OCI-LY7 (cell line): ENCODE measurements at regions of chr10 and their contacts with region 1.

Region 1: GRCh38 chr10:31928549-31929260 is at the start of gene ARHGAP12:
- DNase-seq: peak; percentile 85
- H3K4me3 ChIP-seq: peak within 1 kb of the TSS; percentile 84
- H3K27ac ChIP-seq: peak within 1 kb of the TSS; percentile 61
- H3K4me1 ChIP-seq: peaks cover 44% of the 10 kb centered on the region
- CTCF ChIP-seq: no peak
- total RNA-seq, gene ARHGAP12: 11.8 and 15.6 TPM in 2 replicates

Region 2: DNA sequence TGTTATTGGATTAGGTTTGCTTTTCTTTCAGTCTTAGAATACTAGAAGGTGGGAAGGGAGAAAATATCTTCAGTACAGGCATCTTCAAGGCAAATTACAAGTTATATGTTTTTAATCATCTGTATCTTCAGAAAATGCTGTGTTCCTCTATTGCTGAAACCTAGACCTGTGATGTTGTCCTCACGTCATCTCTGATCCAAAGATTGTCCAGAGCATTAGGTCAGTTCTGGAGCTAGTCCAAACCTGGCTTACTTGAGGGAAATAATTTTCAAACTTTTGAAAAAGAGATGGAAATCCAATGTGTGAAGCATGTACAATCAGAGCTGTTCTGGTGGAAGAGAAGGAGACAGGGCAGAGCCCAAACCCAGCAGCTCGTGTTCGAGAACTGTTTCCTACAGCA is 392.4 kb before region 1 on chr10:
- CTCF ChIA-PET with region 1: no interaction called
- POLR2A ChIA-PET with region 1: no interaction called
- intact Hi-C with region 1: no loop called
- DNase-seq: no peak
- H3K4me3 ChIP-seq: no peak overlapping the region
- H3K27ac ChIP-seq: no peak overlapping the region
- H3K4me1 ChIP-seq: no peaks in the 10 kb centered on the region
- CTCF ChIP-seq: no peak

Region 3: DNA sequence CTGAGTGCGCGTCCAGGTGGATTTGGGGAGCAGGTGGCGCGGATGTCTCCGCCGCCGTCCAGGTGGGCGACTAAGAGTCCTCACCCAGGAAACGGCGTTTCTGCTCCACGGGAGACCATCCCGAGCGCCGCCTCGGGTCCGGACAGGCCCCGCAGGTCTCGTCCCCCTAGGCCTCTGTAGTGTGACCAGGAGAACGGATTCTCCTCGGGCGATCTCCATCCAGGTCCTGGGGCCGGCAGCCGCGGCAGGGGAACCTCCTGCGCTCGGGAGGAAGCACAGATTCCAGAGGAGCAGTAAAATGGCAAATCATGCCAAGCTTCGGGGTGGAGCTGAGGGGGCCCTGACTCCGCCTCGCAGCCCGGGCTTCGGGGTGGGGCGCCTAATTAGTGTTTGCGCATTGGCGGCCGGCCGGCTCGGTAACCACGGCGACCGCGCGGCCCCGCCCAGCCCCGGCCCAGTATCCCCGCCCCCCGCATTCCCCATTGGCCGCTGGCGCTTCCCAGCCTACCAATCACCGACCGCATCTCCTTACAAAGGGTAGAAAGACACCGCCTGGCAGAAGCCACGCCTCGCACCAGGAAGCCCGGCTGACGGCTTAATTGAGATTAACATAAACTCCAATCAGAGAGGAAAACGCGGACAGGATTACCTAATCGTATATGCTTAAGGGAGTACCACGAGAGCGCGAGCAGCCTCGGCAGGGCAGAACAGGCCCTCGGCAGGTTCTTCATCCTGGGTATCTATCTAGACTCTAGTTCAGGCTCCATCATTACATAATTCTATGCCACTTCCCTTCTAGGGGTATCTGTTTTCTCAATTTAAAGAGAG is 168.7 kb before region 1 on chr10:
- CTCF ChIA-PET with region 1: no interaction called
- POLR2A ChIA-PET with region 1: no interaction called
- intact Hi-C with region 1: loop called (anchors 5 kb)
- DNase-seq: peak; percentile 98
- H3K4me3 ChIP-seq: peak overlapping the region; percentile 80
- H3K27ac ChIP-seq: peak overlapping the region; percentile 42
- H3K4me1 ChIP-seq: peaks cover 8% of the 10 kb centered on the region
- CTCF ChIP-seq: no peak

Region 4: DNA sequence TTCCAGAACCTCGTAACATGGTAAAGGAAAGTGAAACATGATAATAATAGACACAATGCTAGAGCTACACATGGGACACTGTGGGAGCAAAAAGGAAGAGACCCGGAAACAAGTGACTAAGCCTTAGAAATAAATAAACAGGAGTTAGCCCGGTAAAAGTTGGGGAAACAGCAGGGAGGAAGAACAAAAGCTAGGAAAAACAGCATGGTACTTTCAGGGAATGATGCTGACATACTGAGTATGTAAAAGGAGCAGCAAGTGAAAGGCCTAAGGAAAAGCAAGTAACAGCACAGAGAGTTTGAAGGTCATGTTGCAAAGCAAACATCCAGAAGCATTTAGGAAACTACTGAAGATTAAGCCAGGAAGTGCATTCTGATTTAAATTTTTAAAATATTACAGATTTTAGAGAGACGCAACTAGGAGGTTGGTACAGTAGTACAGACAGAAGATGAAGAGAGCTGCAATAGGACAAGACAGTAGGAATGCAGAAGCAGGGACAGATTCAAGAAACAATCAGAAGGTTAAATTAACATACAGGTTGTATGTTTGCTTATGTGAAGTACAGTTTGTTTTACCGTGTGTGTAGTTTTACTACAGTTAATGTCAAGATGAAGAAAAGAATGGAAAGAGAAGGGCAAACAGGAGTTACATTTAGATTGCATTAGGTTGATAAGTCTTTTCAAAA is 63.7 kb before region 1 on chr10:
- CTCF ChIA-PET with region 1: no interaction called
- POLR2A ChIA-PET with region 1: interaction called, 12 read pairs
- intact Hi-C with region 1: no loop called
- DNase-seq: no peak
- H3K4me3 ChIP-seq: no peak overlapping the region
- H3K27ac ChIP-seq: no peak overlapping the region
- H3K4me1 ChIP-seq: peaks cover 7% of the 10 kb centered on the region
- CTCF ChIP-seq: no peak

Region 5: GRCh38 chr10:32055813-32056600 is 127.3 kb after region 1 on chr10 and contains the start of gene KIF5B:
- CTCF ChIA-PET with region 1: no interaction called
- POLR2A ChIA-PET with region 1: interaction called, 9 read pairs
- intact Hi-C with region 1: loop called (anchors 5 kb)
- DNase-seq: peak; percentile 92
- H3K4me3 ChIP-seq: peak within 1 kb of the TSS; percentile 87
- H3K27ac ChIP-seq: peak within 1 kb of the TSS; percentile 78
- H3K4me1 ChIP-seq: peaks cover 37% of the 10 kb centered on the region
- CTCF ChIP-seq: no peak
- total RNA-seq, gene KIF5B: 63.8 and 73.8 TPM in 2 replicates

Region 6: DNA sequence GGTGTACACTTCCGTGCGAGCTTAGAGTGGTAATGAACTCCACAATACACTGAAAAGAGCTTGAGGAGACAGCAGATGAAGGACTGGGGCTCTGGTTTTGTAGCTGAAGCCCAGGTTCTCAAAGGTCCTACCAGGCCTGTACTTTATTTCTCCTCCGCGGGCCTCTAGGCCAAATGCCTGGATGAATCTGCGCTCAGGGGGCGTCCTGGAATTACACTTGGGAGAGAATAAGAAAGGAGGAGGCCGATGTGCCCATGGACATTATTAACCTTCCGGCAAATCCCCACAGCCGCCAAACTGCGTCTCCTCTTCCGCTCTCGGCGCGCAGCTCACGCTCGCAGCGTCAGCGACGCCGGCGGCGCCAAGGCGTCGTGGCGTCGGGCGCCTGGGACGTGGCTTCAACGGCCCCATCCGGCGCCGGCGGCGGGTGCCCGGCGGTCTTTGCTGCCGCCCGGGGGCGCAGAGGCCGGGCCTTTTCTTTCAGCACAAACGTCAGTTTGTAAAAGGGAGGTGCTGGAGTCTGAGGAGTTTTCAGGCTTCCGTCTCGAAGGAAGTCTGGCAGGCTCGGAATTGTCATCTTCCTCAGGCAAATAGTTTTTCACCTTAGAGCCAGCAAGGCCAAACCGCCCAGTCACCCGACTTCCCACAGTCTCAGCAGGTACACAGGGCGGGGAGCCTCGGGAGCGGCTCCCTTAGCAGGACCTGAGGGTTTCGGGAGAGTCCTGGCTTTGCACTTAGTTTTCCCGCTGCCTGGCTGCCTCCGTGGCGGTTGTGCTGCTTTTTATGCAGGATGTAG is 517.2 kb after region 1 on chr10 and contains the start of gene CCDC7:
- CTCF ChIA-PET with region 1: no interaction called
- POLR2A ChIA-PET with region 1: no interaction called
- intact Hi-C with region 1: loop called (anchors 5 kb)
- DNase-seq: peak; percentile 93
- H3K4me3 ChIP-seq: peak within 1 kb of the TSS; percentile 79
- H3K27ac ChIP-seq: peak within 1 kb of the TSS; percentile 66
- H3K4me1 ChIP-seq: peaks cover 8% of the 10 kb centered on the region
- CTCF ChIP-seq: peak; percentile 72
- total RNA-seq, gene CCDC7: 9.8 and 10.9 TPM in 2 replicates